ENCODE measurements at regions of chr11 and their contacts with region 1.

Region 1: GRCh38 chr11:269146-269890 is 8.9 kb upstream of the NLRP6 start:
- DNase-seq: peak; percentile 69
- ATAC-seq: peak; percentile 47
- H3K4me3 Mint-ChIP-seq: peak overlapping the region; percentile 75
- H3K27ac Mint-ChIP-seq: peak overlapping the region; percentile 92
- H3K4me1 Mint-ChIP-seq: peaks cover 35% of the 10 kb centered on the region
- H3K27me3 Mint-ChIP-seq: peaks cover 2% of the 10 kb centered on the region

Region 2: DNA sequence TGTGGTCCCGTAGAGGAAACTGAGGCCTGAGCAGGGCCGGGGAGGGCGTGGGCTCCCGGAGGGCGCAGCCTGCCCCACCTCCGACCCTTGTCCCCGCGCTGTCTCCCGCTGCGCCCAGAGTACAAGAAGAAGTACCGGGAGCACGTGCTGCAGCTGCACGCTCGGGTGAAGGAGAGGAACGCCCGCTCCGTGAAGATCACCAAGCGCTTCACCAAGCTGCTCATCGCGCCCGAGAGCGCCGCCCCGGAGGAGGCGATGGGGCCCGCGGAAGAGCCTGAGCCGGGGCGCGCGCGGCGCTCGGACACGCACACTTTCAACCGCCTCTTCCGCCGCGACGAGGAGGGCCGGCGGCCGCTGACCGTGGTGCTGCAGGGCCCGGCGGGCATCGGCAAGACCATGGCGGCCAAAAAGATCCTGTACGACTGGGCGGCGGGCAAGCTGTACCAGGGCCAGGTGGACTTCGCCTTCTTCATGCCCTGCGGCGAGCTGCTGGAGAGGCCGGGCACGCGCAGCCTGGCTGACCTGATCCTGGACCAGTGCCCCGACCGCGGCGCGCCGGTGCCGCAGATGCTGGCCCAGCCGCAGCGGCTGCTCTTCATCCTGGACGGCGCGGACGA is 10.8 kb after region 1 on chr11:
- CTCF ChIA-PET with region 1: interaction called, 31 read pairs
- POLR2A ChIA-PET with region 1: interaction called, 115 read pairs
- DNase-seq: peak; percentile 68
- ATAC-seq: peak; percentile 28
- H3K4me3 Mint-ChIP-seq: peak overlapping the region; percentile 81
- H3K27ac Mint-ChIP-seq: peak overlapping the region; percentile 90
- H3K4me1 Mint-ChIP-seq: peaks cover 55% of the 10 kb centered on the region
- H3K27me3 Mint-ChIP-seq: peaks cover 9% of the 10 kb centered on the region

Region 3: DNA sequence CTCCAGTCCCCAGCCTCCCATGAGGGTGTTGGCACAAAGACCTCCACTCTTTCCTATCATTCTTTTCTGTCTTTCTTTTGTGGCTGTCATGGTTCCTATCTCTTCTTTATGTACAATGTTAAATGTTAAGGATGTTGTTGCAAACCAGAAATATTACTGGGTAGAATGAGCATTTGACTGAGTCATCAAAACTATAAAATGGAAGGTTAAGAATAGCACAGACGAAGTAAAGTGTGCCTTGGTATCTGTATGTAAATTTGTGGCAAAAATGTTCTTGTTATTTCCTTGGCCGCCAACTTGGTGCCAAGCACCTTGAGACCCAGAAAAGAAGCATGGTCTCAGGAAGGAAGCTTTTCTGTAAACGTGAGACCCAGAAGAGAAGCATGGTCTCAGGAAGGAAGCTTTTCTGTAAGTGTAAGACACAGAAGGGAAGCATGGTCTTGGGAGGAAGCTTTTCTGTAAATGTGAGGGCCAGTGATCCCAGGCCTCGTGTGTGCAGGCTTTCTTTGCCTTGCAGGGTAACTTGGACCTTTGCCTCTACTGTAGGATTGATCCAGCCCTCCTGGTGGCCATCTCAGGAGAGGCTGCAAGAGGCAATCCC is 118.0 kb after region 1 on chr11:
- CTCF ChIA-PET with region 1: no interaction called
- POLR2A ChIA-PET with region 1: no interaction called
- DNase-seq: no peak
- ATAC-seq: no peak
- H3K4me3 Mint-ChIP-seq: no peak overlapping the region
- H3K27ac Mint-ChIP-seq: no peak overlapping the region
- H3K4me1 Mint-ChIP-seq: peaks cover 2% of the 10 kb centered on the region
- H3K27me3 Mint-ChIP-seq: peaks cover 12% of the 10 kb centered on the region

Region 4: GRCh38 chr11:587978-588380 is 318.7 kb after region 1 on chr11:
- CTCF ChIA-PET with region 1: no interaction called
- POLR2A ChIA-PET with region 1: no interaction called
- DNase-seq: peak; percentile 86
- ATAC-seq: peak; percentile 96
- H3K4me3 Mint-ChIP-seq: peak overlapping the region; percentile 77
- H3K27ac Mint-ChIP-seq: peak overlapping the region; percentile 100
- H3K4me1 Mint-ChIP-seq: peaks cover 34% of the 10 kb centered on the region
- H3K27me3 Mint-ChIP-seq: no peaks in the 10 kb centered on the region

Region 5: DNA sequence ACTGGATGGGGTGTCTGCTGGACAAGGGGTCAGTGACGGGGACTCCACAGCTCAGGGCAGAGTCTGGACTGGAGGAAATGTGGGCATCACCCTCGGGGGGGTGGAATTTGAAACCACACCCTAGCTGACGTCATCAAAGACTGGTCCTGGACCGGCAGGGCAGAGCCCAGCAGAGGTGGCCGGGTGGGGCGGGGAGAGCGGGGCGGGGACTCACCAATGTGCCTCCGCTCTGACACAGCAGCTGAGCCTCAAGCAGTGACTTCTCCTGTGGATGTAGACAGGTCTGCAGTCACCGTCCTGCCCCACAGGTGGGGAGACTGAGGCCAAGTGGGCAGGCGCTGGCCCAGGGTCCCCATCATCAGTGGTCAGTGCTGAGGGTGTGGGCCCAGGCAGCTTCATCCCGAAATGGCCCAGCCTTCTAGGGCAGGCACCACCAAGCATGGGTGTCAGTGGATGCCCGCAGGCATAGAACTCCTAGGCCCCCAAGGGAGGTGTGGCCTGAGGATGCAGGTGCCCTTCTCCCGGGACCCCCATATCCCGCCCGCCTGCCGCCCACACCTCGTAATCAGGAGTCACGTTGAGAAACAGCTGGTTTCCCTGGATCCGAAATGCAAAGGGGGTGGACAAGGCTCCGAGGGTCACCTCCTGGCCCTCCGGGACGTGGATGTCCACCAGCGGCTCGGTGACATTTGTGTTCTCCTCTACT is 354.8 kb after region 1 on chr11:
- CTCF ChIA-PET with region 1: no interaction called
- POLR2A ChIA-PET with region 1: no interaction called
- DNase-seq: no peak
- ATAC-seq: no peak
- H3K4me3 Mint-ChIP-seq: no peak overlapping the region
- H3K27ac Mint-ChIP-seq: no peak overlapping the region
- H3K4me1 Mint-ChIP-seq: peaks cover 15% of the 10 kb centered on the region
- H3K27me3 Mint-ChIP-seq: peaks cover 11% of the 10 kb centered on the region

Measured in activated CD8-positive, alpha-beta T cell treated with anti-CD3 and anti-CD28 coated beads, Interleukin-2, amount 10 ng/mL, durations not matched to agents 7 days and 5 days (primary cell).